Lower leg skin (tissue), 4 donors: ENCODE measurements at regions of chr9 and their contacts with region 1.

Region 1: DNA sequence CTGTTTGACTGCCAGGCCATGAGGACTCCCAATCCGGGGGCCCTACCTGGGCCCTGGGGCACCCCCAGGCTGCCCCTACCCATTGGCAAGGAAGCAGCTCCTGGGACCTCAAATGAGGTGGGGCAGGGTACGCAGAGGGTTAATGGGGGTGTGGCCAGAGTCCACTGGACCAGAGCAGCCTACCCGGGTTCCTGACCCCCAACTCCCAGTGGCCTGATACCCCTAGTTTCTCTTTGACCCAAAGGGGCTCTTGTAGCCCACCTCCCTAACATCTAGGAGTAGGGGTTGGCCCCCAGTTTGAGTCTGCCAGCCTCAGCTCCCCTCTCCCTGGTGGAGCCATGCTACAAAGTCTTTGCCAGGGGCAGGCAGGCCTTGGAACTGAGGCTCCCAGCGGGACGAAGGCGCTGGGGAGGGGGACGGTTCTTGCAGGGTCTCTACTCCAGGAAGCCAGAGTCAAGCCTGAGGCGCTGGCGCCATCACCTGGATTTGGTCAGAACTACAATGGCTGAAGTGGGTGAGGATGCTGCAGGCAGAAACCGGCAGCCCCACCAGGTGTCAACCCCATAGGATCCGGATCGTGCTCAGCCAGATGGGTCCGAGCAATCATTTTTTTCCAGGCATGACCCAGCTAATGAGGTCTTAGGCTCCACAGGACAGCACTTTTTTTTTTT is 8.4 kb upstream of the CERCAM start:
- DNase-seq: peak in 1 of 2 donors; percentile 35
- H3K4me3 ChIP-seq: no peak overlapping the region
- CTCF ChIP-seq: no peak
- POLR2A ChIP-seq: no peak

Region 2: DNA sequence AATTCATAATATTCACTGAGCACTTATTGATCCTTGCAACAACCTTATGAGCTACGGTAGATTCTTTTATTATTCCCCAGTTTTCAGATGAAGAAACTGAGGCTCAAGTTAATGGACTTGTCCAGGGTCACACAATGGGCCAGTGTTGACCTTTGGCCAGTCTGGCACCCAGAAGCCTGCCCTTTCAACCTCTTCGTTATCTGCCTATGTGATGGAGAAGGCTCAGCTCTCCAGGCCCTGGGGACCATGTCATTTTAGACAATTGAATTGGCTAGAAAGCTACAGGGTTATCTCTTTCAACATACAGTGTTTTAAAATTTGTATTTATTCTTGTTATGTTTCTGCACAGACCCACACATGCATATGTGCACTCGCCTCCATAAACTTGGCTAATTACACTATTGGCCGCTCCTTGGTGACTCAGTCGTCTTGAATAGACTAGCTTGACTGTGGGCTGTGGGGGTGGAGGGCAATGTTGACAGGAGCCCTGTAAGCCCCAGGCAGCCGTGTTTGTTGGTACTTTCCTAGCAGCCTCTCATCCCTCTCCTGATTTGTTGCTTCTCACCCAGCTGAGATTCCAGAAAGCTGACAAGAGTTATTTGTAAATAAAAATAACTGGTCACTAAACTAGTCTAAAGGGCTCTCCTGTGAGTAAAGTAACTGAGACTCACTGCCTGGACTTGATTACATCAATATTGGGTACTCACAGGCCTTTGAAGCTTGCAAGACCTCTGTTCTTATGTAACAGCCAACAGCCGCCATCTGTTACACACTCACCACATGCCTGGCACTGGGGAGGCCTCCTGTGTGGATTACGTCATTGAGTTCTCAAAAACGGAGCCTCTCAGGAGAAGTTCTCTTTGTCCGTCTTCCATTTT is 1281.4 kb before region 1 on chr9:
- intact Hi-C with region 1: no loop called
- DNase-seq: peak; percentile 73 to 92
- H3K4me3 ChIP-seq: no peak overlapping the region
- CTCF ChIP-seq: no peak
- POLR2A ChIP-seq: no peak

Region 3: DNA sequence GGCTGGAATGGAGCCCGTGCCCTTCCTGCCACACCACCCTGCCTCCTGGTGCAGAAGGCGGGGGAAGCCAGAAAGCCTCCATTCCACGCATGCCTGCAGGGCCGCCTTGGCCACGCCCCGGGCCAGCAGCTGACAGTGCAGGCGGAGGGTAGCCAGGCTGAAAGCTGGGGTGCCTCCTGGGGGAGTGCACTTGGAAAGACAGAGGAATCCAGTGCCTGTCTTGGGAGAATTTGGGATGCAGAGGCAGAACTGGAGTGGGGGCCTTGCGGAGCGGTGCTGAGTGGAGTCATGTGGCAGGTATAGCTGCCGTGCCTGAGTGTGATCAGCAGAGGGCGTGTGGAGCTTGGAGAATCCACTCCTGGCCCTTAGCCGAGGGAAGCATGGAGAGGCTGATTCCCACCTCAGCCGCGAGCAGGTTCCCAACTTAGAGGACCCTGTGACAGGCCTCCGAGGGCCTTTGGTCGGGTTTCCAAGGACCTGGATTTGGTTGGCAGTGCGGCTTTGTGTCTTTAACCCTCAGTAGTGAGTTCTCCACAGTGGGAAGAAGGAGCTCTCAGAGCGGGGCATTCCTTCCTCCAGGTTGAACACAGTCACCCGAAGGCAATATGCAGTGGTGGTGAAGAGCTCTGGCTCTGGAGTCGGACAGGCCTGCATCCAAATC is 50.1 kb before region 1 on chr9:
- intact Hi-C with region 1: loop called (anchors 10 kb)
- DNase-seq: peak; percentile 83 to 97
- H3K4me3 ChIP-seq: no peak overlapping the region
- CTCF ChIP-seq: peak in 1 of 3 donors; percentile 82
- POLR2A ChIP-seq: no peak